ENCODE measurements at regions of chr4 and their contacts with region 1.

Region 1: GRCh38 chr4:48779998-48780742 is at the start of gene FRYL:
- DNase-seq: peak; percentile 99
- ATAC-seq: peak; percentile 94
- H3K4me3 ChIP-seq: peak within 1 kb of the TSS; percentile 69
- H3K27ac ChIP-seq: peak within 1 kb of the TSS; percentile 85
- H3K4me1 ChIP-seq: peaks cover 6% of the 10 kb centered on the region
- H3K27me3 ChIP-seq: no peaks in the 10 kb centered on the region
- CTCF ChIP-seq: no peak
- POLR2A ChIP-seq: peak; percentile 79
- RAD21 ChIP-seq: no peak
- total RNA-seq, gene FRYL: 77.4 and 82.2 TPM in 2 replicates

Region 2: DNA sequence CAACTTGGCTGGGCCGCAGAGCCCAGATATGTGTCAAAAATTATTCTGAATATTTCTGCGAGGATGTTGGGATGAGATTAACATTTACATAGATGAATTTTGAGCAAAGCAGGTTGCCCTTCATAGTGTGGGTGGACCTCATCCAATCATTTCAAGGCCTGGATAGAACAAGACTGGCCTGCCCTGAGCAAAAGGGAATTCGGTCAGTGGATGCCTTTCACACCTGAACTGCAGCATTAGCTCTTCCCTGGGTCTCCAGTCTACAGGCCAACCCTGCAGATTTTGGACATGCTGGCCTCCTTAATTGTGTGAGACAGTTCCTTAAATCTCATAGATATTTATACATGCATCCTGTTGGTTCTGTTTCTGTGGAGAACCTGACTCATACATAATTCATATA is 329.4 kb before region 1 on chr4:
- CTCF ChIA-PET with region 1: no interaction called
- POLR2A ChIA-PET with region 1: no interaction called
- dilution Hi-C with region 1: no loop called
- in situ Hi-C with region 1: no loop called
- intact Hi-C with region 1: no loop called
- DNase-seq: no peak
- ATAC-seq: no peak
- H3K4me3 ChIP-seq: no peak overlapping the region
- H3K27ac ChIP-seq: no peak overlapping the region
- H3K4me1 ChIP-seq: no peaks in the 10 kb centered on the region
- H3K27me3 ChIP-seq: peaks cover 5% of the 10 kb centered on the region
- CTCF ChIP-seq: no peak
- POLR2A ChIP-seq: no peak
- RAD21 ChIP-seq: no peak

Region 3: DNA sequence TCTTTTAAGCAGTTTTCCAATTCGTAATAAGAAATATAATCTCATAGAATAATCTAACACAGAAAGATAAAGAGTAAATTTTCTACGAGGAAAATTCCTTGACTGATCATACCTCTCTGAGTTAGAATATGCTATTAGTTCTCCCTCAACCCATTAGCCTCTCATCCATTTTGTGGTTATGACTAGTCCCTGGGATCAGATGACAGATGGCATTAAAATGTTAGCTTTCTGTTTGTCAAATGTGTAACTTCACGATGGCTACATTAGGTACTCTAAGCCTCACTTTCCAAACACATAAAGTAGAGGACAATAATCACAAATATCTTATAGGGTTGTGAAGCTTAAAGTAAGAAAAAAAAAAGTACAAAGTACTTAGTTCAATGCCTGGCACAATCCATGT is 177.9 kb before region 1 on chr4:
- CTCF ChIA-PET with region 1: no interaction called
- POLR2A ChIA-PET with region 1: no interaction called
- dilution Hi-C with region 1: no loop called
- in situ Hi-C with region 1: no loop called
- intact Hi-C with region 1: loop called (anchors 5 kb)
- DNase-seq: peak; percentile 75
- ATAC-seq: peak; percentile 63
- H3K4me3 ChIP-seq: no peak overlapping the region
- H3K27ac ChIP-seq: no peak overlapping the region
- H3K4me1 ChIP-seq: peaks cover 1% of the 10 kb centered on the region; the same call in 1 of the 2 replicates
- H3K27me3 ChIP-seq: no peaks in the 10 kb centered on the region
- CTCF ChIP-seq: no peak
- POLR2A ChIP-seq: no peak
- RAD21 ChIP-seq: no peak

Region 4: DNA sequence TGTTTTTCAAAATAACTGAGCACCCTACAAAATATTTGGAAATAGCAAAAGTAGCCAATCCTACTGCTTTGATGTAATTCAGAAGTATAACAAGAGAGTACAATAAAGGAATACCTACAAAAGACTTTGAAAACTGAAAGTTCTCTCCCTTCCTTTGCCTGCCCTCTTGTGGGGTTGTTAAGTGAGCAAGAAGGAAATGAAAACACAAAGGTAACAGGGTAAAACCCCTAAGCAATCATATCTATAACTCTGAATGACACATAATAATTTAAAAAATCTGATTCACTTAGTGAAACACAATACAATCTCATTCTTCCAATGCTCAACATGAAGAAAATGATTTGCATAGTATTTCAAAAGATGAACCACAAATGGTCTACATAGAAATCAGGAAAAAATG is 98.3 kb before region 1 on chr4:
- CTCF ChIA-PET with region 1: no interaction called
- POLR2A ChIA-PET with region 1: no interaction called
- dilution Hi-C with region 1: no loop called
- in situ Hi-C with region 1: no loop called
- intact Hi-C with region 1: loop called (anchors 5 kb)
- DNase-seq: peak; percentile 52
- ATAC-seq: peak; percentile 66; the same call in 1 of the 2 replicates
- H3K4me3 ChIP-seq: no peak overlapping the region
- H3K27ac ChIP-seq: no peak overlapping the region
- H3K4me1 ChIP-seq: no peaks in the 10 kb centered on the region; the same call in 1 of the 2 replicates
- H3K27me3 ChIP-seq: no peaks in the 10 kb centered on the region
- CTCF ChIP-seq: peak; percentile 56
- POLR2A ChIP-seq: no peak
- RAD21 ChIP-seq: peak; percentile 65

Region 5: DNA sequence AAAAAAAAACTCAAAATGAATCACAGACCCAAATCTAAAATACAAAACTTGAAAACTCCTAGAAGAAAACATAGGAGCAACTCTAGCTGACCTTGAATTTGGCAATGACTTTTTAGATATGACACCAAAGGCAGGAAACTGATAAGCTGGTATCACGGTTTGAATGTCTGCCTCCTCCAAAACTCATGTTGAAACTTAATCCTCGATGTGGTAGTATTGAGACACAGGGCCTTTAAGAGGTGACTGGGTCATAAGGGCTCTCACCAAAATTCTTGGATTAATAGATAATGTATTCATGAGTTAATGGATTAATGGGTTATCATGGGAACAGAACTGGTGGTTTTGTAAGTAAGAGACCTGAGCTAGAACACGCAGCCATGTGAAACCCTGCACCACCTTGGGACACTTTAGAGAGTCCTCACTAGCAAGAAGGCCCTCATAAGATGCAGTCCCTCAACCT is 40.6 kb before region 1 on chr4:
- CTCF ChIA-PET with region 1: no interaction called
- POLR2A ChIA-PET with region 1: interaction called, 10 read pairs
- dilution Hi-C with region 1: no loop called
- in situ Hi-C with region 1: no loop called
- intact Hi-C with region 1: no loop called
- DNase-seq: no peak
- ATAC-seq: no peak
- H3K4me3 ChIP-seq: no peak overlapping the region
- H3K27ac ChIP-seq: no peak overlapping the region
- H3K4me1 ChIP-seq: 0 out of 2 replicates have a peak, but pooled peaks cover 1% of the 10 kb centered on the region
- H3K27me3 ChIP-seq: no peaks in the 10 kb centered on the region
- CTCF ChIP-seq: no peak
- POLR2A ChIP-seq: no peak
- RAD21 ChIP-seq: no peak

Region 6: GRCh38 chr4:48830706-48831531 is 50.7 kb after region 1 on chr4 and contains the start of gene OCIAD1:
- CTCF ChIA-PET with region 1: no interaction called
- POLR2A ChIA-PET with region 1: no interaction called
- dilution Hi-C with region 1: no loop called
- in situ Hi-C with region 1: loop called (anchors 5 kb)
- intact Hi-C with region 1: loop called (anchors 1 kb)
- DNase-seq: peak; percentile 100
- ATAC-seq: peak; percentile 98
- H3K4me3 ChIP-seq: peak within 1 kb of the TSS; percentile 76
- H3K27ac ChIP-seq: peak within 1 kb of the TSS; percentile 98
- H3K4me1 ChIP-seq: no peaks in the 10 kb centered on the region
- H3K27me3 ChIP-seq: no peaks in the 10 kb centered on the region
- CTCF ChIP-seq: no peak
- POLR2A ChIP-seq: peak; percentile 71
- RAD21 ChIP-seq: no peak
- total RNA-seq, gene OCIAD1: 86.9 and 106 TPM in 2 replicates